BJ (cell line): ENCODE measurements at regions of chr11 and their contacts with region 1.

Region 1: GRCh38 chr11:86818466-86819192 is 18.3 kb downstream of the PRSS23 start:
- DNase-seq: no peak
- H3K4me3 ChIP-seq: no peak overlapping the region
- H3K27me3 ChIP-seq: no peaks in the 10 kb centered on the region
- CTCF ChIP-seq: peak; percentile 58

Region 2: DNA sequence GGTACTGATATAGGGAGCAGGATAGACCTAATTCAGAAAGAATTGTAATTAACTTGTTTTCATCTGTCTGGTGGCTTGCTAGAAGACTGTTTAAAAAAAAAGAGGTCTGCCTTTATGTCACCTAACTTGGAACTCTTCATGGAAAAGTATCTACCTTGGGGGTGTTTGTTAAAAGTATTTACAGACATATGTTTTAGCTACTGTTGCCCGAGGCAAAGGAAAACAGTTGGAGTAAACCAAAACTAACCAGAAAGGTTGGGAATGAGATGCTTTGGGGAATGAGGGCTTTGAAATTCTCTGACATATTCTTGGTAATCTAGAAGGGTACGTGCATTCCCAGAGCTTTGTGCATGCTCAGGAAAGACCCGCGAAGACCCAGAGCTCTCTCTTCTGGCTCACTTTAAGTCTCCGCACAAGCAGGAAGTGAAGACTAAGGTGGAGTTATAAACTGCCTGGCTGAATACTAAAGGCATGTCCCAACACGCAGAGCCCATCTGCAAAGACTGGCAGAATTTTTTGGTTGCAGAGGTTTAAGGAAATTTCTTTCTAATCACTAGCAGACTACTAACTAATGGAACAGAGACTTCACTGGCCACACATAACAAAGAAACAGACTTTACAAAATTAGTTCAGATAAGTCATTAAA is 483.4 kb before region 1 on chr11:
- CTCF ChIA-PET with region 1: no interaction called
- POLR2A ChIA-PET with region 1: interaction called, 13 read pairs
- DNase-seq: peak; percentile 20
- H3K4me3 ChIP-seq: no peak overlapping the region
- H3K27me3 ChIP-seq: no peaks in the 10 kb centered on the region
- CTCF ChIP-seq: no peak

Region 3: GRCh38 chr11:86386746-86387145 is 431.9 kb before region 1 on chr11:
- CTCF ChIA-PET with region 1: no interaction called
- POLR2A ChIA-PET with region 1: no interaction called
- DNase-seq: no peak
- H3K4me3 ChIP-seq: no peak overlapping the region
- H3K27me3 ChIP-seq: no peaks in the 10 kb centered on the region
- CTCF ChIP-seq: no peak

Region 4: DNA sequence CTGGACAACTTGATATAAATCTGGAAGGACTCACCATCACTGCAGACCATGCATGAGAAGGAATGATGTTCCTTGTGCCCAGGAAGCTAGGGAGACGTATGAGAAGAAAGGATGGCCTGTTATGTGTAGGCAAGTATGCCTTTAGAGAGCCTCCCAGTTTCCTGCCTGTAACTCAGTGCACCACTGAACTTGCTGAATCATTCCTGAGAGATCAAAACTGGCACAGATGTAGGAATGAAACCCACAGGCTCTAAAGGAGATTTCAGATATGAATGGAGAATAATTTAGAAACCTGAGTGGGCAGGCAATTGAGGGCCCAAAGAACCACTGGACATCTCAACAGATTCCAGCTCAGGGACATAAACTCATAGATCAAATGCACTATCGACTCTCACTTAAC is 56.7 kb before region 1 on chr11:
- CTCF ChIA-PET with region 1: no interaction called
- POLR2A ChIA-PET with region 1: no interaction called
- DNase-seq: no peak
- H3K4me3 ChIP-seq: no peak overlapping the region
- H3K27me3 ChIP-seq: no peaks in the 10 kb centered on the region
- CTCF ChIP-seq: no peak

Region 5: GRCh38 chr11:87013912-87014825 is 195.5 kb after region 1 on chr11:
- CTCF ChIA-PET with region 1: no interaction called
- POLR2A ChIA-PET with region 1: no interaction called
- DNase-seq: no peak
- H3K4me3 ChIP-seq: no peak overlapping the region
- H3K27me3 ChIP-seq: peaks cover 4% of the 10 kb centered on the region; the same call in 1 of the 2 replicates
- CTCF ChIP-seq: no peak